ENCODE measurements at regions of chr6 and their contacts with region 1.

Region 1: DNA sequence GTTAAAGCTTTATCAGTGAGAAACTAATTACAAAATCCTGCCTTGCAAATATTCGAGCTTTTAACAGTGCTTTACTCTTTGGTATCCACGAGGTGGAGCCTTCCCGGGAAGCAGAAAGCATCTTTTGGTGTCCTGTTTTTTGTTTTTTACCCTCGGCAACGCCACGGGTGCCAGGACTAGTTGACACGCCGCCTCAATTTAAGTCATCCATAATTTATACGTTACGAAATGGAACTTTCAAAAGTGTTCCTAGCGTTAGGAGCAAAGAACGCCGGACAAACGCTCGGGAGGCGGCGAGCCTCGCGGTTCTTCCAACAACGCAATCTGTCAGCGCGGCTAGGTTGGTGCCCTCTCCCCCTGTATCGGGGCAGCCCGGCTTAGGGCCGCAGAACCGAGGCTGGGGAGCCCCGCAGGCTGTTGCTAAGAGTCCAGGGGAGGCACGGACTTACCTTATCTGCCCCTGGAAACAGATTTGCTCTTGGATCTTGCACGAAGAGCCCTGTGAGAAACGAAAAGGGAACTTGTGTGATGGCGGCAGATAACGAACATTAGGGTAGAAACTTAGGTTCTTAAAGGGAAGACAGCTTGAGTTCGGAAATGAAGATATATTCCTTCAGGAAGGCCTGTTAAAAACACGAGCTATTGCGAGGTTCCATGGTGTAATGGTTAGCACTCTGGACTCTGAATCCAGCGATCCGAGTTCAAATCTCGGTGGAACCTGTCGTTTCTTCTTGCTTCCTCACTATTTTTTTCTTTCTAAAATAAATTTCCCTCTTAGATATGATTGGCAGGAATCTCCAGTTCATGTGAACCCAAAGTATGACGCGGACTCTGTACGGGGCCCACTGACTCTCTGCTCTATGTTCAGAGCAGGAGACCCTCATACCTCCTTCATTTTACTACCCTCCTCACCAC is 46.2 kb upstream of the ZNF184 start:
- DNase-seq: peak; percentile 63 to 72 (median 68)
- H3K4me3 ChIP-seq: peak overlapping the region; percentile 66 to 76
- H3K4me3 Mint-ChIP-seq: peak overlapping the region; percentile 87 to 93 (median 89)
- H3K27ac ChIP-seq: peak overlapping the region; percentile 64
- H3K27ac Mint-ChIP-seq: peak overlapping the region; percentile 51 to 91 (median 88)
- H3K4me1 ChIP-seq: peaks cover 9% of the 10 kb centered on the region
- H3K4me1 Mint-ChIP-seq: peaks cover 12 to 31% (median 18%) of the 10 kb centered on the region in 4 donors
- H3K27me3 ChIP-seq: no peaks in the 10 kb centered on the region
- H3K27me3 Mint-ChIP-seq: peaks cover 9 to 20% of the 10 kb centered on the region in 2 donors

Region 2: GRCh38 chr6:27312146-27312949 is 206.8 kb before region 1 on chr6 and contains the start of gene POM121L2:
- CTCF ChIA-PET with region 1: no interaction called
- POLR2A ChIA-PET with region 1: no interaction called
- intact Hi-C with region 1: loop called (anchors 2 kb)
- DNase-seq: peak; percentile 50 to 68 (median 61)
- H3K4me3 ChIP-seq: peak within 1 kb of the TSS; percentile 44 to 57
- H3K4me3 Mint-ChIP-seq: peak within 1 kb of the TSS; percentile 81 to 86 (median 83)
- H3K27ac ChIP-seq: no peak within 1 kb of the TSS
- H3K27ac Mint-ChIP-seq: peak within 1 kb of the TSS in 3 of 7 donors; percentile 7 to 37 (median 21)
- H3K4me1 ChIP-seq: peaks cover 5% of the 10 kb centered on the region
- H3K4me1 Mint-ChIP-seq: peaks cover 0 to 14% (median 7%) of the 10 kb centered on the region in 4 donors
- H3K27me3 ChIP-seq: peaks cover 26% of the 10 kb centered on the region
- H3K27me3 Mint-ChIP-seq: peaks cover 39 to 55% of the 10 kb centered on the region in 2 donors
- total RNA-seq, gene POM121L2: not detected

Region 3: DNA sequence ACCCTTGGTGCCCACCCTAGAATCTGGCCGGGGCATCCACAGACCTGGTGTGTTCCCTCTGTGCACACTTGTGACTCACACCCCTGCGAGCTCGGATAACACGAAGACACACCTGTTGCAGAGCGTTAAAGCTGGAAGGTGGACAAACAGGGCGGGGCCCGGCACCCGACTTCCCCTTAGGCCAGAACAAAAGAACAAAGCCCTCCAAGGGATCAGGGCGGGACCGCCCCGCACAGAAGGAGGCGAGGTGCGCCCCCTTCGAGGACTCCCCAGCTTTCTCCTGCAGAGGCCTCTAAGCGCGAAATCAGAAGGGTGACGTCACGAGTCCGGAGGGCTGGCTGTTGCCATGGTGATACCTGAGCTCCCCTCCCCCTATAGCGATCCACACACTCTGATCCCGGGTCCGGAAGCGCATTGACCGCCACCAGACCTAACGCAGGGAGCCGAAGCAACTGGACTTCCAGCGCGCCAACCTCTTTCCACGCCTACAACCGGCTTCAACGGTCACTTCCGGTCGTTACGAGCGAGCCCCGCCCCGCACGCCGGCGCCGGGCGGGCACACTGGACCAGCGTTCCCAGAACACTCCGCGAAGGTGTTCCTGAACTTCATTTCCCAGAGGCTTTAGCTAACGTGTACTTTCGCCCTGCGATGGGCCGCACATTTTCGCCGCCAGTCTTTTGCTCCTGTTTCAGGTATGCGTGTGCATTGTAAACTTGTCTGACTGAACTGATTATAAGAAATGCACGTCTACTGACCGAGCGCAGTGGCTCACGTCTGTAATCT is 46.3 kb before region 1 on chr6 and contains the start of gene ZNF184:
- CTCF ChIA-PET with region 1: interaction called, 4 read pairs
- POLR2A ChIA-PET with region 1: interaction called, 19 read pairs
- intact Hi-C with region 1: no loop called
- DNase-seq: peak; percentile 86 to 90 (median 89)
- H3K4me3 ChIP-seq: peak within 1 kb of the TSS; percentile 70 to 98
- H3K4me3 Mint-ChIP-seq: peak within 1 kb of the TSS; percentile 92 to 99 (median 96)
- H3K27ac ChIP-seq: peak within 1 kb of the TSS; percentile 92
- H3K27ac Mint-ChIP-seq: peak within 1 kb of the TSS; percentile 93 to 99 (median 96)
- H3K4me1 ChIP-seq: peaks cover 56% of the 10 kb centered on the region
- H3K4me1 Mint-ChIP-seq: peaks cover 33 to 65% (median 43%) of the 10 kb centered on the region in 4 donors
- H3K27me3 ChIP-seq: no peaks in the 10 kb centered on the region
- H3K27me3 Mint-ChIP-seq: no peaks in the 10 kb centered on the region
- total RNA-seq, gene ZNF184: 15.2 to 17.4 TPM

Region 4: GRCh38 chr6:27503436-27504030 is 15.6 kb before region 1 on chr6:
- CTCF ChIA-PET with region 1: interaction called, 40 read pairs
- POLR2A ChIA-PET with region 1: interaction called, 28 read pairs
- intact Hi-C with region 1: loop called (anchors 1 kb)
- DNase-seq: peak; percentile 79 to 82 (median 80)
- H3K4me3 ChIP-seq: peak overlapping the region; percentile 79
- H3K4me3 Mint-ChIP-seq: peak overlapping the region; percentile 87 to 94 (median 90)
- H3K27ac ChIP-seq: peak overlapping the region; percentile 9
- H3K27ac Mint-ChIP-seq: peak overlapping the region; percentile 78 to 99 (median 91)
- H3K4me1 ChIP-seq: peaks cover 36% of the 10 kb centered on the region
- H3K4me1 Mint-ChIP-seq: peaks cover 25 to 44% (median 33%) of the 10 kb centered on the region in 4 donors
- H3K27me3 ChIP-seq: peaks cover 4% of the 10 kb centered on the region
- H3K27me3 Mint-ChIP-seq: peaks cover 0 to 25% of the 10 kb centered on the region in 2 donors

Region 5: DNA sequence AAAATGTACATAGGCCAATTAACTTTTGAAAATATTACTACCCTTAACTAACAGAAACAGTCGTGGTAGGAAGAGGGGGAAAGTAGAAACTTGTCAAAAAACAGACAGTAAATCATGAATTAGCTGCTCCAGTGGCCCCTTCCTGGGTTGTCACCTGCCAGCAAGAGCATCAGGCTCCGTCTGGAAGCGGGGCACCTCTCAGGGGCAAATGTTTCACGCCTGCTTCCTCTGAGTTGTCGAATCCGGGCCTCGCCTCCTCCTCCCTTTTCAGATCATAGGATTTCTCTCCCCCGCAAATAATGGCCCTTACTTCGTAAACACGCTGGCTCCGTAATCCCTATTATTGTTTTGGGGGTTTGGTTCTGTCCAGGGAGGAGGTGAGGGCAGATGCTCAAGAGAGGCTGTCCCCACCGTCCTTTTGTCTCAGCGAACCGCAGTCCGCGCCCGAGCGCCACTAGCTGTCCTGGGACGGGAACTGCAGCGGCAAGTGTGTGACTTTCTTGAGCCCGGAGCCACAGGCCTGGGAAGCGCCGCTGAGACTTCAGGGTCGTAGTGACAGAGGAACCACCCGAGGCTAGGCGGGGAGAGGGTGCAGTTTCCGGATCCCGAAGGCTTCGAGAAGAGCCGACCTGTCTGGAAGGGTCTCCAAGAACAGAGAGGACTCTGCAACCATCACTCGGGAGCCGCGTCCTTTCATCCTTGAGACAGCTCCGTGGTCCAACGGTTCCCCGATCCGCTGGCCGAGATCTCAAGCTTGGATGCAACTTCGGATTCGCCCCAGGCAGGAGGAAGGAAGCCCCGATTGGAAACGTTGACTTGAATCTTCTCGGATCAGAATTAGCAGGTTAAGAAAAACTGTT is 168.2 kb after region 1 on chr6:
- CTCF ChIA-PET with region 1: no interaction called
- POLR2A ChIA-PET with region 1: interaction called, 3 read pairs
- intact Hi-C with region 1: loop called (anchors 1 kb)
- DNase-seq: peak; percentile 66 to 81 (median 71)
- H3K4me3 ChIP-seq: peak overlapping the region; percentile 98
- H3K4me3 Mint-ChIP-seq: peak overlapping the region; percentile 86 to 96 (median 92)
- H3K27ac ChIP-seq: peak overlapping the region; percentile 65
- H3K27ac Mint-ChIP-seq: peak overlapping the region; percentile 76 to 100 (median 94)
- H3K4me1 ChIP-seq: peaks cover 16% of the 10 kb centered on the region
- H3K4me1 Mint-ChIP-seq: peaks cover 16 to 26% (median 20%) of the 10 kb centered on the region in 4 donors
- H3K27me3 ChIP-seq: peaks cover under 1% of the 10 kb centered on the region
- H3K27me3 Mint-ChIP-seq: peaks cover 6 to 14% of the 10 kb centered on the region in 2 donors

Region 6: DNA sequence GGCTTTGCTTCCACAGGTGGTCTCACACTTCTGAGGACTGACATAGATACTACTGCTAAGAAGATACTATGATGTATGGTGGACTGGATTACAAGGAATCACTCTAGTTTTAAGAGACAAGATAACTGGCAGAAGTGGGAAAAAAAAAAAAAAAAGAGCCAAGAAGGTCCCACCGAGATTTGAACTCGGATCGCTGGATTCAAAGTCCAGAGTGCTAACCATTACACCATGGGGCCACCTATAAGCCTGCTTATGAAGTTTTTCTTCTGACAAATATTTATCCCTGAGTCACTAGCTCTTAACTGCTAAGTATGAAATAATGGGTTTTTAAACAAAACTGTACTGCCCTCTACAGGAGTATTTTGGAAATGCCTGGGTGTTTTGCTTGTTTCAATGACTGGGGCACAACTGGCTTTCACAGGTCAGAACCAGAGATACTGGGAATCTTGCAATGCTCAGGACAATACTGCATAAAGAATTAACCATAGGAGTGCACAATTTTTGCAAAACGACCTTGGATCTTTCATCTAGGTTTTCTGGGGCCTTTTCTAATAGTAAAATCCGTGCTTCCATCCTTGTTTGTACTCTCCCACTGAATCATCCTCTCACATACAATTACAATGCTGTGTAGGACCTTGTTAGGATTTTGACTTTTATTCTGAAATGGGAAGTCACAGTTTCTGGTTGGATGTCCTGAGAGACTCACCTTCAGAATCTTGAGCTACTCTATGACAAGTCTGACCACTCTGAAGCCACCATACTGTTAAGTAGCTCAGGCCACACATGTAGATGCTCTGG is 276.8 kb after region 1 on chr6:
- CTCF ChIA-PET with region 1: interaction called, 3 read pairs
- POLR2A ChIA-PET with region 1: no interaction called
- intact Hi-C with region 1: loop called (anchors 2 kb)
- DNase-seq: peak; percentile 75 to 82 (median 80)
- H3K4me3 ChIP-seq: no peak overlapping the region
- H3K4me3 Mint-ChIP-seq: peak overlapping the region in 1 of 8 donors; percentile 16
- H3K27ac ChIP-seq: no peak overlapping the region
- H3K27ac Mint-ChIP-seq: peak overlapping the region in 5 of 7 donors; percentile 6 to 91 (median 35)
- H3K4me1 ChIP-seq: peaks cover 21% of the 10 kb centered on the region
- H3K4me1 Mint-ChIP-seq: peaks cover 17 to 29% (median 21%) of the 10 kb centered on the region in 4 donors
- H3K27me3 ChIP-seq: peaks cover 6% of the 10 kb centered on the region
- H3K27me3 Mint-ChIP-seq: peaks cover 6 to 13% of the 10 kb centered on the region in 2 donors

Region 7: GRCh38 chr6:27902335-27903314 is 383.5 kb after region 1 on chr6:
- CTCF ChIA-PET with region 1: interaction called, 24 read pairs
- POLR2A ChIA-PET with region 1: no interaction called
- intact Hi-C with region 1: loop called (anchors 2 kb)
- DNase-seq: peak; percentile 87 to 91 (median 90)
- H3K4me3 ChIP-seq: peak overlapping the region; percentile 53
- H3K4me3 Mint-ChIP-seq: peak overlapping the region; percentile 87 to 98 (median 90)
- H3K27ac ChIP-seq: peak overlapping the region; percentile 51
- H3K27ac Mint-ChIP-seq: peak overlapping the region; percentile 94 to 100 (median 97)
- H3K4me1 ChIP-seq: peaks cover 5% of the 10 kb centered on the region
- H3K4me1 Mint-ChIP-seq: peaks cover 0 to 12% (median 4%) of the 10 kb centered on the region in 4 donors
- H3K27me3 ChIP-seq: peaks cover 4% of the 10 kb centered on the region
- H3K27me3 Mint-ChIP-seq: peaks cover 8 to 10% of the 10 kb centered on the region in 2 donors

Measured in CD4-positive, alpha-beta memory T cell (primary cell).